GM10248 (cell line): ENCODE measurements at regions of chr2 and their contacts with region 1.

Region 1: DNA sequence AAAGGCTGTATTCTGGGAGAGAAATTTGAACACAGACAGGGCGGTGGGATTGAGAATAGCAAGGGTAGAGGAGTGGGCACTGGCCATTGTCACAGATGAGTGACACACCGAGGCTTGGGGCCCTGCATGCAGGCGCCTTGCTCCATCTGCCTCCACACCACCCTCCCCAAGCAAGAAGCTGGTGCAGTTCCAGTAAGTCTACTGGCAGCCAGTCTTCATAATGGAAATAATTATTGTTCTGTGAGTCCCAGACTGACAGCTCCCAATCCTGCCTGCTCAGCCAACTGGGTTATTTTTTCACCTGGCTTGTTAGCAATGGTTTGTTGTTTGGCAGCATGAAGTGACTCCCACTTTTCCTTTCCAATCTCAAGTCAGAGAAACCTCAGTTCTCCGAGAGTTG is 13.0 kb downstream of the TTC32 start:
- DNase-seq: no peak
- CTCF ChIP-seq: no peak

Region 2: GRCh38 chr2:19762142-19762541 is 126.7 kb before region 1 on chr2:
- CTCF ChIA-PET with region 1: no interaction called
- POLR2A ChIA-PET with region 1: interaction called, 12 read pairs
- DNase-seq: no peak
- CTCF ChIP-seq: no peak

Region 3: DNA sequence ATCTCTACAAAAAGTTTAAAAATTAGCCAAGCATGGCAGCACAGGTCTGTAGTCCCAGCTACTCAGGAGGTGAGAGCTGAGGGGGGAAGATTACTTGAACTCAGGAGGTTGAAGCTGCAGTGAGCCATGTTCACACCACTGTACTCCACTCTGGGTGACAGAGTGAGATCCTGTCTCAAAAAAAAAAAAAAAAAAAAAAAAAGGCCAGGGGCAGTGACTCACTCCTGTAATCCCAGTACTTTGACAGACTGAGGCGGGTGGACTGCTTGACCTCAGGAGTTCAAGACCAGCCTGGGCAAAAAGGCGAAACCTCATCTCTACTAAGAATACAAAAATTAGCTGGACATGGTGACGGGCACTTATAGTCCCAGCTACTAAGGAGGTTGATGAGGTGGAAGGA is 424.8 kb after region 1 on chr2:
- CTCF ChIA-PET with region 1: no interaction called
- POLR2A ChIA-PET with region 1: no interaction called
- DNase-seq: no peak
- CTCF ChIP-seq: no peak